ENCODE measurements at regions of chr1 and their contacts with region 1.

Region 1: GRCh38 chr1:206865013-206865671 is at the start of gene IL20:
- DNase-seq: peak; percentile 98
- H3K4me3 Mint-ChIP-seq: no peak within 1 kb of the TSS
- H3K27ac Mint-ChIP-seq: no peak within 1 kb of the TSS
- H3K4me1 Mint-ChIP-seq: peaks cover 30% of the 10 kb centered on the region
- H3K27me3 Mint-ChIP-seq: no peaks in the 10 kb centered on the region
- total RNA-seq, gene IL20: 0.31 TPM in 1 of 2 experiments, not detected in the other

Region 2: GRCh38 chr1:206814716-206815341 is 50.3 kb before region 1 on chr1:
- CTCF ChIA-PET with region 1: interaction called, 7 read pairs
- intact Hi-C with region 1: loop called (anchors 2 kb)
- DNase-seq: no peak
- H3K4me3 Mint-ChIP-seq: no peak overlapping the region
- H3K27ac Mint-ChIP-seq: no peak overlapping the region
- H3K4me1 Mint-ChIP-seq: peaks cover 21% of the 10 kb centered on the region
- H3K27me3 Mint-ChIP-seq: no peaks in the 10 kb centered on the region

Region 3: DNA sequence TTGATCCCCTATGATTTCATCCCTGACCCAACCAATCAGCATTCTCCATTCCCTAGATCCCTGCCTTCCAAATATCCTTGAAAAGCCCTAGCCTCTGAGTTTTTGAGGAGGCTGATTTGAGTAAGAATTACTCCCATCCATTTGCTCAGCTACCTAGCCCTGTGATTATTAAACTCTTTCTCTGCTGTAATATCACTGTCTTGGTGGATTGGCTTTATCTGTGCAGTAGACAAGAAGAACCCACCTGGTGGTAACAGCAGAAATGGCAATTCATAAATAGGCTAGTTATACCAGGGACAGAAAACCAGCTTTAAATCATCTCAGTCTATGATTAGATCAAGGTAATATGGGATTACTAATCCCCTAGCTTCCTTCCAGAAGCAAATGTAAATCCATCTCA is 13.3 kb after region 1 on chr1:
- CTCF ChIA-PET with region 1: interaction called, 8 read pairs
- intact Hi-C with region 1: loop called (anchors 1 kb)
- DNase-seq: no peak
- H3K4me3 Mint-ChIP-seq: no peak overlapping the region
- H3K27ac Mint-ChIP-seq: no peak overlapping the region
- H3K4me1 Mint-ChIP-seq: no peaks in the 10 kb centered on the region
- H3K27me3 Mint-ChIP-seq: no peaks in the 10 kb centered on the region

Region 4: GRCh38 chr1:206890690-206891089 is 25.5 kb after region 1 on chr1:
- CTCF ChIA-PET with region 1: interaction called, 4 read pairs
- intact Hi-C with region 1: loop called (anchors 2 kb)
- DNase-seq: no peak
- H3K4me3 Mint-ChIP-seq: no peak overlapping the region
- H3K27ac Mint-ChIP-seq: peak overlapping the region; percentile 64
- H3K4me1 Mint-ChIP-seq: peaks cover 68% of the 10 kb centered on the region
- H3K27me3 Mint-ChIP-seq: peaks cover 1% of the 10 kb centered on the region

Region 5: DNA sequence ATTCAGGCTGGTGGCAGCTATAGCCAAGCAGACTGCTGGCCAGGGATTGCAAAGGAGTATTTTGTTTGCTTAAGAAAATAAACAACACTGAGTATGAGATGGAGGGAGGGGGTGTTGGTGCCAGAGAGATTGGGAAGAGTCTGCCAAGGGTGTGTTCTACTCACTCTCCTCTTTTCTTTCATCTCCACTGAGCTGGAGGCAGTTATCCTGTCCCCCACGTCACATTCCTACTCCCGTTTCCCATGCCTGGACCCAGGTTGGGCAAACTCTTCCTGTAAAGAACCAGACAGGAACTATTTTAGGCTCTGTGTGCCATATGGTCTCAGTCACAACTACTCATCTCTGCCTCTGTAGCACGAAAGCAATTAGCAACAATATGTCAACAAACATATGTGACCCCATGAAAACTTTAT is 30.7 kb after region 1 on chr1:
- CTCF ChIA-PET with region 1: interaction called, 8 read pairs
- intact Hi-C with region 1: loop called (anchors 1 kb)
- DNase-seq: no peak
- H3K4me3 Mint-ChIP-seq: no peak overlapping the region
- H3K27ac Mint-ChIP-seq: peak overlapping the region; percentile 22
- H3K4me1 Mint-ChIP-seq: peaks cover 92% of the 10 kb centered on the region
- H3K27me3 Mint-ChIP-seq: no peaks in the 10 kb centered on the region

Measured in activated naive CD4-positive, alpha-beta T cell treated with anti-CD3 and anti-CD28 coated beads for 36 hours (primary cell).